CD4-positive, alpha-beta T cell (primary cell): ENCODE measurements at regions of chr20 and their contacts with region 1.

Region 1: DNA sequence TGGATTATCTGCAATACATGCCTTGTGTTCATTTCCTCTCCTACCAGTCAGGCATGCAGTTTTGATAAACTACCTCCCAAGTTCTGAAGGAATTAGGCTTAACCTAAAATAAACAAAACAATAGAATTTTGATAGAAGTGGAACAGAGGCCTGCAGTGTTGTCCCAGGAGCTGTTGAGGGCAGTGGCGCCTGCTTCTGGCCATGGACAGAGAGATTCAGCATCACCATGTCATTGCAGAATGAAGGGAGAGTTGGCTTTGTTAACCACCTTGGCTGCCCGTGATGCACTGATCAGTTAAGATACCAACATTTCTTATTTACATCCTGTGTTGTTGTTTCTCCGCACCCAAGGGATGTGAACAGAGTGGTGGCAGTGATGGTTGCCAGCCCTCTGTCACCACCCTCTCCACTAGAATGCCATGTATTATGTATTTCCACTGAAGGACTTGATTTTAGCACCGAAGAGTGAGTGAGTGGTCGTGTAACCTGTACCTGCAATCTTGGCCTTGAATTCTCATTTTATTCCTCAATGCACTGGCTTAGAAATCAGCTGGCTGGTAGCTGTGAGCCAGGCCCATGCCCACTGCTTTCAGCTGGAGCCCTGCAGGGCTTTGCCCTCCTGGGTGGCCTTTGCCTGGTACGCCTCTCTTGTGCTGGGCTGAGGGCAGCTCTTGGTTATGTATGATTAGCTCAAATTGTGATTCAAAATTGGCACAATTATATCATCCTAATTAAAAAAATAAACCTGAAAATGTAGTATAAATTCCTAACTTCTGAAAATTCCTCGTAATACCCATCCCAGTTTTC is 56.5 kb downstream of the SHLD1 start:
- DNase-seq: peak in 1 of 14 experiments; percentile 7
- ATAC-seq: peak; percentile 40
- H3K4me3 ChIP-seq: no peak overlapping the region
- H3K4me3 Mint-ChIP-seq: peak overlapping the region; percentile 21
- H3K27ac ChIP-seq: no peak overlapping the region
- H3K27ac Mint-ChIP-seq: peak overlapping the region; percentile 68
- H3K4me1 ChIP-seq: peaks cover 11% of the 10 kb centered on the region
- H3K4me1 Mint-ChIP-seq: peaks cover 53% of the 10 kb centered on the region
- H3K27me3 ChIP-seq: no peaks in the 10 kb centered on the region
- H3K27me3 Mint-ChIP-seq: no peaks in the 10 kb centered on the region
- CTCF ChIP-seq: no peak

Region 2: GRCh38 chr20:5820738-5821137 is 14.1 kb after region 1 on chr20:
- CTCF ChIA-PET with region 1: interaction called, 3 read pairs
- POLR2A ChIA-PET with region 1: interaction called, 8 read pairs
- intact Hi-C with region 1: loop called in 1 of 2 experiments (anchors 1 kb)
- DNase-seq: no peak
- ATAC-seq: no peak
- H3K4me3 ChIP-seq: no peak overlapping the region
- H3K4me3 Mint-ChIP-seq: no peak overlapping the region
- H3K27ac ChIP-seq: no peak overlapping the region
- H3K27ac Mint-ChIP-seq: no peak overlapping the region
- H3K4me1 ChIP-seq: no peaks in the 10 kb centered on the region
- H3K4me1 Mint-ChIP-seq: peaks cover 24% of the 10 kb centered on the region
- H3K27me3 ChIP-seq: no peaks in the 10 kb centered on the region
- H3K27me3 Mint-ChIP-seq: no peaks in the 10 kb centered on the region
- CTCF ChIP-seq: no peak

Region 3: GRCh38 chr20:5845681-5846615 is 39.3 kb after region 1 on chr20:
- CTCF ChIA-PET with region 1: no interaction called
- POLR2A ChIA-PET with region 1: no interaction called
- intact Hi-C with region 1: loop called in 1 of 2 experiments (anchors 5 kb)
- DNase-seq: peak in 3 of 14 experiments; percentile 78 to 85 (median 79)
- ATAC-seq: peak; percentile 59
- H3K4me3 ChIP-seq: no peak overlapping the region
- H3K4me3 Mint-ChIP-seq: peak overlapping the region; percentile 8
- H3K27ac ChIP-seq: peak overlapping the region in 1 of 2 donors; percentile 76
- H3K27ac Mint-ChIP-seq: peak overlapping the region; percentile 71
- H3K4me1 ChIP-seq: peaks cover 41% of the 10 kb centered on the region
- H3K4me1 Mint-ChIP-seq: peaks cover 58% of the 10 kb centered on the region
- H3K27me3 ChIP-seq: no peaks in the 10 kb centered on the region
- H3K27me3 Mint-ChIP-seq: no peaks in the 10 kb centered on the region
- CTCF ChIP-seq: no peak